Activated naive CD8-positive, alpha-beta T cell treated with anti-CD3 and anti-CD28 coated beads, Interleukin-2, amount 10 ng/mL, durations not matched to agents 7 days and 5 days (primary cell): ENCODE measurements at regions of chr13 and their contacts with region 1.

Region 1: DNA sequence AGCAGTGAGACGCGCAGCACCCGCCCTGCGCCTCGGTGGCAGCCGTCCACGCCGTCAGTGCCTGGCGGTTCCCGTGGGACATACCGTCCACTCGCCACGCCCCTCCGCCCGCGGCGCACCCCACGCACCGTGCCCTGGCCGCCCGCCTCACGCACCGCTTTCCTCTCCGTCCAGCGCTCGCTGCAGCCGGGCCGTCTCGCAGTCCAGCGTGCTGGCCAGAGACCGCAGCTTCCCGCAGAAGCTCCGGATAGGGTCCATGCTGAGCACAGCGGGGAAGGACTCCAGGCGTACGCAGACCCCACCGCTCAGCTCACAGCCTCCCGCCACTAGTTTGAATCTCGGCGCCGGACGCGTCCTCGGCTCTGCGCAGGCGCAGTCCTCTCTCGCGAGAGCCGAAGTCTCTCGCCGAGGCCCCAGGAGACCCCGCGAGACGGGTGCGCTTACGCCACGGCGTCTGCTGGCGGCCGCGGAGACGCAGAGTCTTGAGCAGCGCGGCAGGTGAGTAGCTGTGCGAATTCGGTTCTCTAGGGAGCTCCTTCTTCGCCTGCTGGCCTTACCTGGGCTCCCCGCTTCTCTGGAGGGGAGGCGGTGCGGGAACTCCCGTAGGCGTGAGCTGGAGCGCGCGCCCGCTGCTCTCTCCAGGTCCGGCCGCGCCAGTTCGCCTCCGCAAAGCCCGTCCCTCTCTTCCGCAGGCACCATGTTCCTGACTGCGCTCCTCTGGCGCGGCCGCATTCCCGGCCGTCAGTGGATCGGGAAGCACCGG is at the starts of genes MRPL57 and SKA3:
- DNase-seq: peak; percentile 98
- ATAC-seq: peak; percentile 97
- H3K4me3 Mint-ChIP-seq: peak within 1 kb of the TSS; percentile 92
- H3K27ac Mint-ChIP-seq: peak within 1 kb of the TSS; percentile 96
- H3K4me1 Mint-ChIP-seq: peaks cover 22% of the 10 kb centered on the region
- H3K27me3 Mint-ChIP-seq: no peaks in the 10 kb centered on the region
- total RNA-seq, gene MRPL57: 19.1 to 20.2 TPM
- total RNA-seq, gene SKA3: 26.1 to 30.9 TPM

Region 2: DNA sequence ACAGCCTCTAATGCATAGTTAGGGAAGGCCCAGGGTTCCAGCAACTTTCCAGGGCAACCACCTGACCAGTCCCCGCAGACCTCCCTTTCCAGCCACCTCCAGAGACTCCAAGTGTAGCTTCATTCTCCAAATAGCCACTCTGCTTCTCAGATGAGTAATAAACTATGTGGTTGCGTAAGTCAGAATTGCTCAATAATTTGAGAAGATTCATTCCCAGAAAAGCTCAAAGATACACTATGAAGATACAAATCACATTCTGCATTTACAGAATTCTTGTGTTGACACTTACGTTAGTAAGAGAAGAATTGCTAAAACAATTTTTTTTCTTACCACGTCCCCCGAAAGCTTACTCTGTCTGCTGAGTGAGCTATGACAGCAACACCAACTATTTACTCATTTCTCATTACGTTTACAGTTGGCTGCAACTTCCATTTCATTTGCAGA is 106.8 kb before region 1 on chr13:
- POLR2A ChIA-PET with region 1: no interaction called
- DNase-seq: no peak
- ATAC-seq: no peak
- H3K4me3 Mint-ChIP-seq: no peak overlapping the region
- H3K27ac Mint-ChIP-seq: no peak overlapping the region
- H3K4me1 Mint-ChIP-seq: peaks cover 17% of the 10 kb centered on the region
- H3K27me3 Mint-ChIP-seq: peaks cover 12% of the 10 kb centered on the region

Region 3: GRCh38 chr13:21149568-21149967 is 26.8 kb before region 1 on chr13:
- POLR2A ChIA-PET with region 1: interaction called, 14 read pairs
- DNase-seq: no peak
- ATAC-seq: no peak
- H3K4me3 Mint-ChIP-seq: no peak overlapping the region
- H3K27ac Mint-ChIP-seq: no peak overlapping the region
- H3K4me1 Mint-ChIP-seq: no peaks in the 10 kb centered on the region
- H3K27me3 Mint-ChIP-seq: no peaks in the 10 kb centered on the region

Region 4: GRCh38 chr13:21218351-21219035 is 42.1 kb after region 1 on chr13:
- POLR2A ChIA-PET with region 1: interaction called, 36 read pairs
- DNase-seq: no peak
- ATAC-seq: peak; percentile 85
- H3K4me3 Mint-ChIP-seq: peak overlapping the region; percentile 53
- H3K27ac Mint-ChIP-seq: peak overlapping the region; percentile 84
- H3K4me1 Mint-ChIP-seq: peaks cover 19% of the 10 kb centered on the region
- H3K27me3 Mint-ChIP-seq: peaks cover 48% of the 10 kb centered on the region

Region 5: GRCh38 chr13:21282065-21282464 is 105.7 kb after region 1 on chr13:
- POLR2A ChIA-PET with region 1: no interaction called
- DNase-seq: no peak
- ATAC-seq: no peak
- H3K4me3 Mint-ChIP-seq: no peak overlapping the region
- H3K27ac Mint-ChIP-seq: no peak overlapping the region
- H3K4me1 Mint-ChIP-seq: no peaks in the 10 kb centered on the region
- H3K27me3 Mint-ChIP-seq: peaks cover 18% of the 10 kb centered on the region

Region 6: DNA sequence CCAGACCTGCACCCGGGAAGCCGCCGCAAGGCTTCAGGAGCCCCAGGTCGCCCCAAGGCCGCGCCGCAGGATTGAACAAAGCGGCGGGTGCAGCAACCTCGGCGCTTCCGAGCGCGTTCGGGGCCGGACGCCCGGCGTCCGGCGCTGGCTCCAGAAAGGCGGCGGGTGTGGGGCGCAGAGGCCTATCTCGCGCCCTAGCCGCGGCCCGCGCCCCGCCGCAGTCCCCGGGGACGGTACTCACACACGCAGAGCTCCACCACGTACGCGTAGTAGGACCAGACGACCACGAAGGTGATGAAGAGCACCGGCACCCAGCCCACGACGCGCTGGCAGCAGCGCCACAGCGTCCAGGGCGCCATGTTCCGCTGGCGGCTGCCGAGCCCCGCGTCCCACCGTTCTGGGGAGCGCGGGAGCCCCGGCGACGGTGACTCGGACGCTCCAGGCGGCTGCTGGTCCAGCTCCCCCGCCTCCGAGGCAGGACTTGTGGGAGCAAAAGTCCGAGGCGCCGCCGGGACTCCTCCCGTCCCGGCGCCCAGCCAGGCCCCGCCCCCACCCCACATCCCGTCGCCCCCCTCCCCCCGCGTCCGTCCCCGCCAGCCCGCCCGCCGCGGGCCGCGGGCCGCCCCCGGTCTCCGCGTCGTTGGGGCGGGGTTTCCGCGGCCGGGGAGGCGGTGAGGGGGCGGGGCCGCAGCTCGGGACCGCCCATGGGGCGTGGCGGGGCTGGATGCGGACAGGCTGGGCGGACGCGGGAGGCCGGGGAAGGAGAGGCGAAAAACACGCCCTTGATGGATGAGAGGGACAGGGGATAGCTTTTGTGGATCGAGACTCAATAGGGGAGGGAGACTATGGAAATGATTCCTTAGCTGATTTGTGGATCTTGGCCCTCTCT is 282.7 kb after region 1 on chr13 and contains the start of gene ZDHHC20:
- POLR2A ChIA-PET with region 1: interaction called, 14 read pairs
- DNase-seq: peak; percentile 98
- ATAC-seq: peak; percentile 80
- H3K4me3 Mint-ChIP-seq: peak within 1 kb of the TSS; percentile 95
- H3K27ac Mint-ChIP-seq: peak within 1 kb of the TSS; percentile 96
- H3K4me1 Mint-ChIP-seq: peaks cover 25% of the 10 kb centered on the region
- H3K27me3 Mint-ChIP-seq: no peaks in the 10 kb centered on the region
- total RNA-seq, gene ZDHHC20: 78.9 to 99.9 TPM